A673 (cell line): ENCODE measurements at regions of chr20 and their contacts with region 1.

Region 1: DNA sequence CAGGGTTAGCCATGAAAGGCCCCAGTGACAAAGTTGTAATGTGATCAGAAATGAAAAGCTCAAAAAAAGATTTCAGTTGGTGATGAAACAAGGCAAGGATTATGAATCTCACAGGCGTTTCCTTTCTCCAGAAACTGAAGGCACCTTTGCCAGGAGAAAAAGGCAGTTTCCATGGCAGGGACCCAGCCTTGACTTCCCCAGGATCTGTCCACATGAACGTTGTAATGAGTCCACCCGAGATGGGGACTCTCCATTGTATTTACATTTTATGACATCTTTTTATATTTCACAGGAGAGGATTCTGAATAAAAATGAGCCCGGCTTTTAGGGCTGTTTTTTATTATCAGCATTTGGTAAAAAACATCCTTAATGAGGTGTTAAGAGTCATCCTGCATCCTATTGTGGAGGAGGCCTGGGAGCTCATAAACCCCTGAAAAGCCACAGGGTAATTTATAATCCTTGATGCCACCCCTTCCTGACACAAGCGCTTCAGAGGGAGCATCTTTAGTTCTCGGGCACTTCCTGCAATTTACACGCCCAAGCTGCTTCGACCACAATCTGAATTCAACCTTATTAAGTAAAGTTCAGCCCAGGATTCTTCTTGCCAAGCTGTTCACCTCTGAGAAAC is 74.1 kb upstream of the SALL4 start:
- DNase-seq: peak; percentile 77
- H3K4me3 ChIP-seq: no peak overlapping the region
- H3K27ac ChIP-seq: peak overlapping the region; percentile 60
- H3K4me1 ChIP-seq: peaks cover 14% of the 10 kb centered on the region
- H3K27me3 ChIP-seq: no peaks in the 10 kb centered on the region
- CTCF ChIP-seq: no peak

Region 2: DNA sequence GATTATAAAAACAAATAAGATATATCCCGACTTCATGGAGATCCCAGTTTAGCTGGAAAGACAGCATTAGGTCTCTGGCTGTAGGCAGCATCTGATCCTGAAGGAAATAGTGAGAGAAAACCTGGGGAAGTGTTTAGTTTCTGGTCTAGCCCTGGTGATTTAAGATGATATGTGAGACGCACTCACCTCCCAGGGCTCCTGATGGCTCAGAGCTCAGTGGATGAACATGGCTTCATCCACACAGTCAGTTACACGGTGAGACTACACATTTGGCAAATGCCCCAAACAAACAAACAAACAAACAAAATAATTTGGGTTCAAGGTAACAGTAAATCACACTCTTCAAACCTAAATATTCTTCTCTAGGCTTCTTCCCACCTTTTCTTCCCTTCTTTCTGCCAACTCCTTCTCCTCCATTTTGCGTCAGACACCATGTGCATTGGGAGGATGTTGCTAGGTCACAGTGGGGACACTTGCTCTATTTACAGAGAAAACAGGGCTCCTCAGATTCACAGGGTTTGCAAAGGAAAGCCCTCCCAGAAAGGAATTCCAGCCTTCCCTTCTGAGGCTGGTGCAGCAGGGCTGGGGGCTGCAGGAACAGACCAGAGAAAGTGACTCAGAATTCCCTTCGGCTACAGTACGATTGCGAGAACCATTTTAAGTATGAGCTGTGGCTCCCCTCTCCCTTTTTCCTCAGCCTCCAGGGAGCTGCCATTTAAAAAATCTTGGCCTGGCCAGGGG is 14.5 kb before region 1 on chr20:
- CTCF ChIA-PET with region 1: no interaction called
- POLR2A ChIA-PET with region 1: interaction called, 12 read pairs
- intact Hi-C with region 1: no loop called
- DNase-seq: no peak
- H3K4me3 ChIP-seq: no peak overlapping the region
- H3K27ac ChIP-seq: no peak overlapping the region
- H3K4me1 ChIP-seq: peaks cover 7% of the 10 kb centered on the region
- H3K27me3 ChIP-seq: no peaks in the 10 kb centered on the region
- CTCF ChIP-seq: no peak

Region 3: DNA sequence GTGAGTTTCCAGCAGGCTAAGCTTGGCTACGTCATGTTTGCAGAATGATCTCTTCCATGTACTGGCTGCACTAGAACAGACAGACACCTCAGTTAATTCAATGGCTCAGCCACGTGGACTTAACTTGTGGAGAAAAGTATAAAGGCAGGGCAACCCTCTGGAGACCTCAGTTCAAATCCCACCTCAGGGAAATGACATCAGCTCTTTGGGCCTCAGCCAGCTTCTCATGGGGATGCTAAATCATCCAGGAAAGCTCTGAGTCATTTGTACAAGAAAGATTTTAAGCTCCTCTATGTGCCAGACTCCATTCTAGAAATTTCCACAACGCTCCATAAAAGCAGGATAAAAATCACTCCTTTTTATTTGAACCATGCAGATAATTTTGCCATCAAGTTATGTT is 54.3 kb after region 1 on chr20:
- CTCF ChIA-PET with region 1: no interaction called
- POLR2A ChIA-PET with region 1: no interaction called
- intact Hi-C with region 1: no loop called
- DNase-seq: peak; percentile 92
- H3K4me3 ChIP-seq: no peak overlapping the region
- H3K27ac ChIP-seq: peak overlapping the region; percentile 1
- H3K4me1 ChIP-seq: peaks cover 51% of the 10 kb centered on the region
- H3K27me3 ChIP-seq: no peaks in the 10 kb centered on the region
- CTCF ChIP-seq: no peak

Region 4: GRCh38 chr20:51941503-51941902 is 65.1 kb after region 1 on chr20:
- CTCF ChIA-PET with region 1: no interaction called
- POLR2A ChIA-PET with region 1: no interaction called
- intact Hi-C with region 1: no loop called
- DNase-seq: no peak
- H3K4me3 ChIP-seq: no peak overlapping the region
- H3K27ac ChIP-seq: no peak overlapping the region
- H3K4me1 ChIP-seq: peaks cover 16% of the 10 kb centered on the region
- H3K27me3 ChIP-seq: no peaks in the 10 kb centered on the region
- CTCF ChIP-seq: no peak